Sciatic nerve (tissue), 2 donors: ENCODE measurements at regions of chr10 and their contacts with region 1.

Region 1: GRCh38 chr10:35223016-35223415 is 96.4 kb downstream of the CREM start:
- DNase-seq: no peak
- ATAC-seq: peak; percentile 9

Region 2: DNA sequence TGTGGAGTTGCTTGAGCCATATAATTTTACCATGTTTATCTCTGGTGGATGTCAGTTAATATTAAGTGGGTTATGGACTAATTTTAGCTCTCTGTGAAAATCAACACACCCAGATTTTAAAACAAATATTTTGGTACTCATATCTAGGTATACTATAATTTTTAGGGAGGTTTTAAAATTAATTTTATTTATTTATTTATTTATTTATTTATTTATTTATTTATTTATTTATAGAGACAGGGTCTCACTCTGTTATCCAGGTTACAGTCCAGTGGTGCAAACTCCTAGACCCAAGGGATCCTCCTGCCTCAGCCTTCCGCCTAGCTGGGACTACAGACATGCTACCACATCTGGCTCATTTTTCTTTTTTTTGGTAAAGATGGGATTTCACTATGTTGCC is 103.6 kb before region 1 on chr10:
- intact Hi-C with region 1: loop called (anchors 5 kb)
- DNase-seq: no peak
- ATAC-seq: no peak